ENCODE measurements at regions of chr7 and their contacts with region 1.

Region 1: DNA sequence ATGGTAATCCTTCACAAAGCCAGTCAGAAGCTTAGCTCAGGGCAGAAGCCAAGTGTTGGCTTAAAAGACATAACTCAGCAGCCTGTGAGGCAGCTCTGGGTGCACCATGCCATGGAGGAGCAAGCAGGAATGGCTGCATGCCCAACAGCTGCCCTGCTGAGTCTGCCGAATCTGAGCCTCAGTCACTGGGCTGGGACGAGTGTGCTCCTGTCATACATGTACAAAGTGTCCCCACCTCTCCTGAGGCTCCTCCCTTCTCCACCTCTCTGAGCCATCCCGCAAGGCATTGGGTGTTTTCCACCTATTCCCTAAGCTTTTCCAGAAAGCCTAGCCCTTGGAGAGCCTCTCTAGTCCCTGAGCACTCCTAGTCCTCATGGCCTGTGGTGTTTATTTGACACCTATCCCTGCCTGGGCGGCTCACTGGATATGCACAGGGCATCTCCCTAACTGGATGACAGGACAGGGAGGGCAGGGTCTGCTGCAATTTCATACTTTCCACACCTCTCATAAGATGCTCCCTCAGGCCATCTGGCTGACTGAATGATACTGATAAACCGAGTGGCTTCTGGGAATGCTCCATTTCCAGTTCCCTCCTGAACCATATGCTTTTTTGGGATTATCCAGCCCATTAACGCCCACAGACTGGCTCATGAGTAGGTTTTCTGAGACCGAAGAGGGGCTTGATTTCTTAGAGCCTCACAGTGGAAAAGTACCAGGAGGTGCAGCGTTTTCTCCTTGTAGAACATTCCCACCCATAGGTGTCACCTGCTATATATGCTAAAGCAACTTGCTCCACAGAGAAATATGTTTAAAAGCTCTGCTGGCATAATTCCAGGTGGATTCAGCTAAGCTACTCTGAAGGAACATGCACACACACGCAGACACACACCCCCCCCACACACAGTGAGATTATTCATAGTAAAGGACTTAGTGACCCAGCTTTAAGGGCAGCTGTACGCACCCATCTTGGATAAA is 199.3 kb downstream of the SNX10 start:
- DNase-seq: peak; percentile 55
- H3K4me3 ChIP-seq: no peak overlapping the region
- H3K27ac ChIP-seq: no peak overlapping the region
- H3K4me1 ChIP-seq: peaks cover 0 to 27% of the 10 kb centered on the region in 2 experiments; a peak in 2 of 4 replicates
- H3K27me3 ChIP-seq: no peaks in the 10 kb centered on the region
- CTCF ChIP-seq: no peak
- EP300 ChIP-seq: no peak
- RAD21 ChIP-seq: no peak

Region 2: GRCh38 chr7:26479581-26479980 is 11.4 kb before region 1 on chr7:
- CTCF ChIA-PET with region 1: interaction called, 15 read pairs
- POLR2A ChIA-PET with region 1: no interaction called
- DNase-seq: no peak
- H3K4me3 ChIP-seq: no peak overlapping the region
- H3K27ac ChIP-seq: no peak overlapping the region
- H3K4me1 ChIP-seq: peaks cover 0 to 2% of the 10 kb centered on the region in 2 experiments; a peak in 2 of 4 replicates
- H3K27me3 ChIP-seq: no peaks in the 10 kb centered on the region
- CTCF ChIP-seq: no peak
- EP300 ChIP-seq: no peak
- RAD21 ChIP-seq: no peak

Region 3: DNA sequence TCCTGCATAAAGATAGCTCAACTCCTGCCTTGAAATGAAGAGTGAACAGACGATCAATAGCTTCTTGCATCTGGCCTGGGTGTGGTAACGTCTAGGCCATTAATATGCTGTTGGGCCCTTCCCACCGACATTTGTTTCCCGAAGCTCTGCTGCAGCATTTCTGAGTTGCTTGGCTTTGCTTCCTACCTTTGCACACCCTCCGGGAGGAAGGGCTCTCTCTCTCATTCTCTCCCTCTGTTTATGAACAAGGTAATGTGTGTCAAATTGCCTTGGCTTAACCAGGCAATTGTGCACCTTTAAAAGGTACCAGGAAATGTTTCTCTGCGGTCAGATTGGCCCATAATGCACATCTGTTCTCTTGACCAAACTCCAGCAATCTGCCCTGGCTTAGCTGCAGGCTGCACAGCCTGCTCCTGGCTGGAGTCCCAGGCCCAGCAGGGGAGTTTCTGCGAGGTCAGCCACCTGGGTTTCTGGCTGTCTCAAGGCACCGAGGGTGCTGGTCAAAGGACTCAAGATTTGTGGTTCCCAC is 24.4 kb after region 1 on chr7:
- CTCF ChIA-PET with region 1: no interaction called
- POLR2A ChIA-PET with region 1: no interaction called
- DNase-seq: peak; percentile 52
- H3K4me3 ChIP-seq: no peak overlapping the region
- H3K27ac ChIP-seq: no peak overlapping the region; a peak in 1 of 4 replicates
- H3K4me1 ChIP-seq: peaks cover 0 to 13% of the 10 kb centered on the region in 2 experiments; a peak in 1 of 4 replicates
- H3K27me3 ChIP-seq: 0 out of 2 replicates have a peak, but pooled peaks cover 9% of the 10 kb centered on the region
- CTCF ChIP-seq: no peak
- EP300 ChIP-seq: no peak
- RAD21 ChIP-seq: no peak

Region 4: DNA sequence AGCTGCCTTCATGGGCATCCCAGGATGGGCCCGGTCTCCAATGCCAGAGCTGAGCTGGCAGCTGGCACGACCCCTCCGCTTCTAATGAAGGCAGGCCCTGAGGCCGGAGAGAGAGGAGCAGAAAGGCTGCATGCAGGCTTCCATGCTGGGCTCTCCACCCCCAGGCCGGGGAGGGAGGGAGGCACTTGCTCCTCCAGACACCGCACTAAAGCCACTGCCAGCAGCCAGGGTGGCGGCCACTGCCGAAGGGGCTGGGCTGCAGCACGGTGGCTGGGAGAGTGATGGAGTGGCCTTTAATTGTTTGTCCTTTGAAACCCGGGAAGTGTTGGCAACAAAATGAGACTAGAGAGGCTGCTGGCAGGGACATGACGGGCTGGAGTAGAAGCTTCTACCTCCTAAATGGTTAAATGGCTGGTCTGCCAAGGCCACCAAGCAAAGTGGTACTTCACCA is 137.0 kb after region 1 on chr7:
- CTCF ChIA-PET with region 1: no interaction called
- POLR2A ChIA-PET with region 1: no interaction called
- DNase-seq: no peak
- H3K4me3 ChIP-seq: no peak overlapping the region
- H3K27ac ChIP-seq: no peak overlapping the region
- H3K4me1 ChIP-seq: peaks cover 0 to 4% of the 10 kb centered on the region in 2 experiments; a peak in 1 of 4 replicates
- H3K27me3 ChIP-seq: no peaks in the 10 kb centered on the region
- CTCF ChIP-seq: no peak
- EP300 ChIP-seq: no peak
- RAD21 ChIP-seq: no peak

Measured in SK-N-SH (cell line).